ENCODE measurements at regions of chr9 and their contacts with region 1.

Region 1: GRCh38 chr9:26863074-26863473 is 29.5 kb downstream of the CAAP1 start:
- DNase-seq: no peak
- ATAC-seq: no peak
- H3K4me3 ChIP-seq: no peak overlapping the region
- H3K27ac ChIP-seq: no peak overlapping the region
- H3K4me1 ChIP-seq: no peaks in the 10 kb centered on the region
- H3K27me3 ChIP-seq: no peaks in the 10 kb centered on the region
- CTCF ChIP-seq: peak; percentile 18

Region 2: GRCh38 chr9:26677965-26678706 is 184.9 kb before region 1 on chr9:
- intact Hi-C with region 1: no loop called
- DNase-seq: no peak
- ATAC-seq: no peak
- H3K4me3 ChIP-seq: no peak overlapping the region
- H3K27ac ChIP-seq: no peak overlapping the region
- H3K4me1 ChIP-seq: no peaks in the 10 kb centered on the region
- H3K27me3 ChIP-seq: no peaks in the 10 kb centered on the region
- CTCF ChIP-seq: no peak

Region 3: GRCh38 chr9:27561685-27562084 is 698.6 kb after region 1 on chr9:
- intact Hi-C with region 1: loop called in 1 of 2 experiments (anchors 5 kb)
- DNase-seq: no peak
- ATAC-seq: no peak
- H3K4me3 ChIP-seq: no peak overlapping the region
- H3K27ac ChIP-seq: no peak overlapping the region
- H3K4me1 ChIP-seq: no peaks in the 10 kb centered on the region
- H3K27me3 ChIP-seq: no peaks in the 10 kb centered on the region
- CTCF ChIP-seq: no peak